Common myeloid progenitor, CD34-positive (primary cell): ENCODE measurements at regions of chr2 and their contacts with region 1.

Region 1: GRCh38 chr2:157420771-157421323 is 23.0 kb downstream of the CYTIP start:
- DNase-seq: peak; percentile 91 to 98 (median 97)
- H3K4me3 ChIP-seq: peak overlapping the region in 1 of 7 experiments; percentile 7
- H3K27ac ChIP-seq: peak overlapping the region; percentile 85 to 90
- H3K4me1 ChIP-seq: peaks cover 31 to 48% (median 41%) of the 10 kb centered on the region in 4 experiments
- H3K27me3 ChIP-seq: no peaks in the 10 kb centered on the region

Region 2: DNA sequence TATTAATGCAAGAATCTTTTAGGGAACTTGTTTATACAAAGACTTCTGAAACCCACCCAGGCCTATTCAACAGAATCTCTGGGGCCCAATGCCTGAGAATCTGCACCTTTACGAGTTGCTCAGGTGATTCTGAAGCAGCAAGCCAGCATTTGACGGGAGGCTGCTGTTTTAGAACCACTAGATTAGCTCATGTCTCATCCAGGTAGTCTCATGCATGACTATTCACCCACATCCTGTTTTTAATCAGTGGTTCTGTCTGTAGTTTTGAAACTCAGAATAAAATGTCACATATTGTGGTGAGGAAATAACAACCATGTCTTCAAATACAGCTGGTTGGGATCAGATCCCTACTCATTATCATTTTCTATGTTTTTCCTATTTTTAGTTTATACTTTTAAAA is 16.5 kb before region 1 on chr2:
- CTCF ChIA-PET with region 1: interaction called, 11 read pairs
- POLR2A ChIA-PET with region 1: interaction called, 9 read pairs
- DNase-seq: peak; percentile 16 to 83 (median 68)
- H3K4me3 ChIP-seq: no peak overlapping the region
- H3K27ac ChIP-seq: no peak overlapping the region
- H3K4me1 ChIP-seq: peaks cover 0 to 3% (median 3%) of the 10 kb centered on the region in 4 experiments
- H3K27me3 ChIP-seq: no peaks in the 10 kb centered on the region

Region 3: DNA sequence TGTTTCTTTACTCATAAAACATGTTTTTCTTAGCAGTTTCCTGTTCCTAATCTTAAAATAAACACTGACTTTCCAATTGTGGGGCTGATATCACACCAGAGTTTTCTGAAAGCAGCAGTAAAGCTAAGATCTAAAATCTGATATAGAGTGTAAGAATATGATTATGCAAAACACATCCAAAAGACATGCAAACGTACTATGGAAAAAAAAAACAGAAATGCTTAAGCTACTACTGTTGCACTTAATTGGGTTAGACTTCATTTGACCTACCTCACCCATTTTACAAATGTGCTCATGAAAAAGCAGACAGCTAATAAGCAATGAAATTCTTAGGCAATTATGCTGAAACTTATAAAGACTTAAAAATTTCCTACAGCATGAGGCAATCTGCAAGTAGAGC is 12.5 kb after region 1 on chr2:
- CTCF ChIA-PET with region 1: interaction called, 24 read pairs
- POLR2A ChIA-PET with region 1: interaction called, 3 read pairs
- DNase-seq: no peak
- H3K4me3 ChIP-seq: peak overlapping the region in 3 of 7 experiments; percentile 18 to 37 (median 25)
- H3K27ac ChIP-seq: peak overlapping the region; percentile 1 to 43
- H3K4me1 ChIP-seq: peaks cover 29 to 49% (median 35%) of the 10 kb centered on the region in 4 experiments
- H3K27me3 ChIP-seq: no peaks in the 10 kb centered on the region

Region 4: DNA sequence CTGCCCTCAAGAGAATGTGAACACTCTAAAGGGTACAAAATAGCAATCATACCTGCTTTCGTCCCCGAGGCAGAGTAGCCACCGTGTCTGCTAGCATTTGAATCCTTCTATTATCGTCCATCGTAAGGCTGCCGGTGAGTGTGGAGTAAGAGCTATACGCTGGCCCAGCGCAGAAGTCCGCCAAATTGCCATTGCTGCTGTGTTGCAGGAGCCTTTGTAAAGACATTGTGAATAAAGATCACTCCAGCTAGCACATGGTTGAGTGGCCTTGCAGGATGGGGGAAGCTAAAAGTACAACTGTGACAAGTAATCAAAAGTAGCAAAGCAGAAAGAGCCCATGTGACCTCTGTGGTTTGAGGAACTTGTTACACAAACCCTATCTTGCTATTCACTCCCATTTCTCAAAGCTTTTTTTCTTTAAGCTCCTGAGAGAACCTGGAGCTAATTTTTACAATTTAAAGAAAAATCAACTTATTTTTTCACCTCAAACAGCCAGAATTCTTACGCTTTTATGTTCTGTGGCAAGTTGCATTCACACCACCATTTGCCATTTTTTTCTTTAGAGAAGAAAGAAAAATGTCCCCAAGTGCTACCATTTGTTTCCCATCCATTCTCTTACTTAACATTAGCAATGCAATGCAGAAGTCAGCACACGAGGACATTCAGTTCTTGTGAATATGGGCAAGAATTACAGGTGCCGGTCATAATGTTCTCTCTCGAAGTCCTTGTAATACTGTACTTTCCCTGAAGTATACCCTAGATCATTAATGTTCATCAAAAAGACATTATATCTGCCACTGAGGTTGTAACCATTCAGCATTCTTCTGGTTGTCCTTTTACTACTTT is 23.2 kb after region 1 on chr2 and contains the start of gene CYTIP:
- CTCF ChIA-PET with region 1: interaction called, 10 read pairs
- POLR2A ChIA-PET with region 1: interaction called, 3 read pairs
- DNase-seq: peak; percentile 67 to 89 (median 86)
- H3K4me3 ChIP-seq: peak within 1 kb of the TSS; percentile 27 to 98 (median 81)
- H3K27ac ChIP-seq: peak within 1 kb of the TSS; percentile 73 to 82
- H3K4me1 ChIP-seq: peaks cover 34 to 52% (median 41%) of the 10 kb centered on the region in 4 experiments
- H3K27me3 ChIP-seq: no peaks in the 10 kb centered on the region

Region 5: GRCh38 chr2:157628477-157629415 is 207.9 kb after region 1 on chr2 and contains the start of gene ACVR1C:
- CTCF ChIA-PET with region 1: no interaction called
- POLR2A ChIA-PET with region 1: no interaction called
- DNase-seq: peak; percentile 75 to 89 (median 87)
- H3K4me3 ChIP-seq: peak within 1 kb of the TSS; percentile 45 to 89 (median 74)
- H3K27ac ChIP-seq: no peak within 1 kb of the TSS
- H3K4me1 ChIP-seq: peaks cover 0 to 20% (median 13%) of the 10 kb centered on the region in 4 experiments
- H3K27me3 ChIP-seq: peaks cover 0 to 13% (median 5%) of the 10 kb centered on the region in 5 experiments